CD8-positive, alpha-beta T cell (primary cell): ENCODE measurements at regions of chr17 and their contacts with region 1.

Region 1: GRCh38 chr17:31508288-31509094 is 117.0 kb downstream of the RAB11FIP4 start:
- DNase-seq: peak; percentile 56 to 95 (median 73)
- ATAC-seq: peak; percentile 91
- H3K4me3 ChIP-seq: peak overlapping the region; percentile 46 to 48
- H3K4me3 Mint-ChIP-seq: peak overlapping the region; percentile 91
- H3K27ac ChIP-seq: peak overlapping the region; percentile 66 to 92
- H3K27ac Mint-ChIP-seq: peak overlapping the region; percentile 98
- H3K4me1 ChIP-seq: peaks cover 59% of the 10 kb centered on the region
- H3K4me1 Mint-ChIP-seq: peaks cover 73% of the 10 kb centered on the region
- H3K27me3 ChIP-seq: no peaks in the 10 kb centered on the region
- H3K27me3 Mint-ChIP-seq: no peaks in the 10 kb centered on the region
- CTCF ChIP-seq: peak; percentile 56

Region 2: GRCh38 chr17:31313982-31314784 is 194.3 kb before region 1 on chr17 and contains the start of gene EVI2B:
- CTCF ChIA-PET with region 1: no interaction called
- POLR2A ChIA-PET with region 1: interaction called, 3 read pairs
- intact Hi-C with region 1: loop called in 1 of 2 experiments (anchors 5 kb)
- DNase-seq: peak in 3 of 9 experiments; percentile 29 to 75 (median 59)
- ATAC-seq: peak; percentile 44
- H3K4me3 ChIP-seq: peak within 1 kb of the TSS; percentile 59 to 67
- H3K4me3 Mint-ChIP-seq: peak within 1 kb of the TSS; percentile 82
- H3K27ac ChIP-seq: peak within 1 kb of the TSS; percentile 50 to 89
- H3K27ac Mint-ChIP-seq: peak within 1 kb of the TSS; percentile 90
- H3K4me1 ChIP-seq: peaks cover 40% of the 10 kb centered on the region
- H3K4me1 Mint-ChIP-seq: peaks cover 52% of the 10 kb centered on the region
- H3K27me3 ChIP-seq: no peaks in the 10 kb centered on the region
- H3K27me3 Mint-ChIP-seq: no peaks in the 10 kb centered on the region
- CTCF ChIP-seq: no peak
- total RNA-seq, gene EVI2B: 77.5 to 82.0 TPM

Region 3: DNA sequence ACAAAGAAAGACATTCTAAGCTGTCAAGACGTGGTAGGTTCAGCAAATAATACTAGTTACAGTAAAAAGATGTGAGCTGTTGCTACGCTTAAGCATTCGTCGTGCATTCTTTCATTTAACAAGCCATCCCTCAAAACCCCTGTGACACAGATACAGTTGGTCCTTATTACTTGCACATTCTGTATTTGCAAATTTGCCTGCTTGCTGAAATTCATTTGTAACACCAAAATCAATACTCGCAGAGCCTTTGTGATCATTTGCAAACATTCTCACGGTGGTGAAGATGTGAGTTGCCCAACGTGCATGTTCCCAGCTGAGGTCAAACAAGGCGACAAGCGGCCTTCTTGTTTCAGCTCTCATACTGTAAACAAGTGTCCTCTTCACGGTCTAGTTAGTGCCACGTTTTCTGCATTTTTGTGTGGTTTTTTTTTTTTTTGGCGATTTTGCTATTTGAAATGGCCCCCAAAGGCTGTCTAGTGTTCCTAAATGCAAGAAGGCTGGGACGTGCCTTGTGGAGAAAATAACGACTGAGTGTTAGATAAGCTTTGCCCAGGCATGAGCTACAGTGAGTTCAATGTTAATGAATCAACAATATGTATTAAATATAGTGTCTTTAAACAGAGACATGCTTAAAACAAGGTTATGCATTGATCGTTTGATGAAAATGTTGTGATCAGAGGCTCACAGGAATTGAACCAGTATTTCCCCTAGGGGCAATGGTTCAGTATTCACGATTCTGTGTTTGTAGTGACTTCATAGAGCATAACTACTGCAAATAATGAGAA is 32.9 kb before region 1 on chr17:
- CTCF ChIA-PET with region 1: interaction called, 4 read pairs
- POLR2A ChIA-PET with region 1: interaction called, 3 read pairs
- intact Hi-C with region 1: loop called in 1 of 2 experiments (anchors 5 kb)
- DNase-seq: no peak
- ATAC-seq: no peak
- H3K4me3 ChIP-seq: no peak overlapping the region
- H3K4me3 Mint-ChIP-seq: no peak overlapping the region
- H3K27ac ChIP-seq: no peak overlapping the region
- H3K27ac Mint-ChIP-seq: no peak overlapping the region
- H3K4me1 ChIP-seq: peaks cover 1% of the 10 kb centered on the region
- H3K4me1 Mint-ChIP-seq: peaks cover 4% of the 10 kb centered on the region
- H3K27me3 ChIP-seq: no peaks in the 10 kb centered on the region
- H3K27me3 Mint-ChIP-seq: no peaks in the 10 kb centered on the region
- CTCF ChIP-seq: no peak

Region 4: DNA sequence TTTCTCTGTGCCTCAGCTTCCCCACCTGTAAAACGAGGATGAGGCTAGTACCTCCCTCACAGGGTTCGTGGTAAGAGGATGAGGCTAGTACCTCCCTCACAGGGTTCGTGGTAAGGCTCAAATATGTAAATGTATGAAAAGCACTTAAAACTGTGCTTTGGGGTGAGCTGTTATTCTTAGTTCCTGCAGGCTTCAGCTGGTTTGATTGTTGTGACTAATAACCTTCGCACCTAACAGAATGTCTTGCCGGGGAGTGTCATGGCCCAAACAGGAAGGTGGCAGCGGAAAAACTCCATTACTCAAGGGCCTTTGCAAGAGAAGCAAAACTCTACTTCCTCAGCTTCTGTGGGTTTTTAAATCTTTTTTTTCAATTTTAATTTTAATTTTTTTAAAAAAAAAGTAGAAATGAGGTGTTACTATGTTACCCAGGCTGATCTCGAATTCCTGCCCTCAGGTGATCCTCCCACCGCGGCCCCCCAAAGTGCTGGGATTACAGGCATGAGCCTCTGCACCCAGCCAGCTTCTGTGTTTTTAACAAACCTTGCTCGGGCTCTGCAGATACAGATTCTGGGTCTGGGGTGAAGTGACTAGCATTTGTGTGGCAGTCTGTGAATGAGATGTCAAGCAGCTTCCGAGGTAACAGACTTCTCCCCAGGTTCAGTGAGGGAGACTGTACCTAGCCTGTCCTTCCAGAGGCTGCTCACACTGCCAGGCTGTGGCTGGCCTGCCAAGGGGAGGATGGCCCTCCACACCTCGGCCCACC is 14.1 kb before region 1 on chr17:
- CTCF ChIA-PET with region 1: interaction called, 48 read pairs
- POLR2A ChIA-PET with region 1: interaction called, 172 read pairs
- intact Hi-C with region 1: loop called (anchors 1 kb)
- DNase-seq: peak in 8 of 9 experiments; percentile 53 to 91 (median 72)
- ATAC-seq: peak; percentile 81
- H3K4me3 ChIP-seq: peak overlapping the region in 1 of 2 experiments; percentile 20
- H3K4me3 Mint-ChIP-seq: peak overlapping the region; percentile 76
- H3K27ac ChIP-seq: peak overlapping the region; percentile 76 to 89
- H3K27ac Mint-ChIP-seq: peak overlapping the region; percentile 97
- H3K4me1 ChIP-seq: peaks cover 97% of the 10 kb centered on the region
- H3K4me1 Mint-ChIP-seq: peaks cover 97% of the 10 kb centered on the region
- H3K27me3 ChIP-seq: no peaks in the 10 kb centered on the region
- H3K27me3 Mint-ChIP-seq: no peaks in the 10 kb centered on the region
- CTCF ChIP-seq: no peak

Region 5: GRCh38 chr17:31549525-31550388 is 41.3 kb after region 1 on chr17:
- CTCF ChIA-PET with region 1: no interaction called
- POLR2A ChIA-PET with region 1: interaction called, 6 read pairs
- intact Hi-C with region 1: loop called in 1 of 2 experiments (anchors 5 kb)
- DNase-seq: peak; percentile 73 to 95 (median 88)
- ATAC-seq: peak; percentile 89
- H3K4me3 ChIP-seq: peak overlapping the region; percentile 73 to 87
- H3K4me3 Mint-ChIP-seq: peak overlapping the region; percentile 87
- H3K27ac ChIP-seq: peak overlapping the region; percentile 56 to 75
- H3K27ac Mint-ChIP-seq: peak overlapping the region; percentile 64
- H3K4me1 ChIP-seq: peaks cover 17% of the 10 kb centered on the region
- H3K4me1 Mint-ChIP-seq: peaks cover 16% of the 10 kb centered on the region
- H3K27me3 ChIP-seq: no peaks in the 10 kb centered on the region
- H3K27me3 Mint-ChIP-seq: no peaks in the 10 kb centered on the region
- CTCF ChIP-seq: no peak